H1 (cell line): ENCODE measurements at regions of chr5 and their contacts with region 1.

Region 1: DNA sequence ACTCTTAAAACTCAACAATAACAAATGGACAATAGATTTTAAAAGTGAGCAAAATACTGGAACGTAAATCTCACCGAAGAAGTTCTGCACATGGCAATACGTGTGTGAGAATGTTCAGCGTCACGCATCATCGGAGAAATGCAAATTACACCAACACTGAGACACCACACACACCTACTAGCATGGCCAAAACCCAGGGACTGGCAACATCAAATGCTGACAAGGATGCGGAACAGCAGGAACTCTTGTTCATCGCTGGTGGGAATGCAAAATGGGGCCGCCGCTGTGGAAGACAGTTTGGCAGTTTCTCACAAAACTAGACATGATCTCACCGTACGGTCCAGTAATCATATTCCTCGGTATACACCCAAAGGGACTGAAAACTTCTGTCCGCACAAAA is 21.6 kb upstream of the CLPTM1L start:
- DNase-seq: no peak
- H3K4me3 ChIP-seq: no peak overlapping the region
- H3K27ac ChIP-seq: no peak overlapping the region
- H3K4me1 ChIP-seq: peaks cover 0 to 3% (median 1%) of the 10 kb centered on the region in 4 experiments; a peak in 1 of 7 replicates
- H3K27me3 ChIP-seq: no peaks in the 10 kb centered on the region
- CTCF ChIP-seq: no peak
- EP300 ChIP-seq: no peak
- POLR2A ChIP-seq: no peak
- RAD21 ChIP-seq: no peak

Region 2: DNA sequence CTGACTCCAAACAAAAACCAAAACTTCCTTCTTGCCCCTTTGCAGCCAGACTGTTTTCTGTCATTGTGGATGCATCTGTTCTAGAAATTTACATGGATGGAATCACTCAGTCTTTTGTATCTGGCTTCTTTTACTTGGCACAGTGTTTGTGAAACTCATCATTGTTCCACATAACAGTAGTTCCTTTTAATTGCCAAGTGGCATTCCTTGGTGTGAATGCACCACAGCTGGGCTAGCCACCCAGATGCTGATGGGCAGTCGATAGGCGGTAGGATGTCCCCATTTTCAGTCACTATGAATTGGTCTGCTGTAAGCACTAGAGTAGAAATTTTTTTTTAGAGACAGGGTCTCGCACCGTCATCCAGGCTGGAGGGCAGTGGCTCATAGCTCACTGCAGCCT is 15.4 kb before region 1 on chr5:
- CTCF ChIA-PET with region 1: interaction called, 13 read pairs
- POLR2A ChIA-PET with region 1: no interaction called
- DNase-seq: no peak
- H3K4me3 ChIP-seq: no peak overlapping the region
- H3K27ac ChIP-seq: no peak overlapping the region
- H3K4me1 ChIP-seq: peaks cover 0 to 4% (median 0%) of the 10 kb centered on the region in 4 experiments; a peak in 1 of 7 replicates
- H3K27me3 ChIP-seq: no peaks in the 10 kb centered on the region
- CTCF ChIP-seq: no peak
- EP300 ChIP-seq: no peak
- POLR2A ChIP-seq: no peak
- RAD21 ChIP-seq: no peak